ENCODE measurements at regions of chr11 and their contacts with region 1.

Region 1: GRCh38 chr11:126062679-126063506 is at the start of gene CDON:
- DNase-seq: peak; percentile 86
- ATAC-seq: peak; percentile 91
- H3K4me3 ChIP-seq: peak within 1 kb of the TSS; percentile 75 to 86 (median 80)
- H3K27ac ChIP-seq: peak within 1 kb of the TSS; percentile 100
- H3K4me1 ChIP-seq: peaks cover 53% of the 10 kb centered on the region
- H3K27me3 ChIP-seq: no peaks in the 10 kb centered on the region
- CTCF ChIP-seq: peak; percentile 60
- EP300 ChIP-seq: peak in 1 of 2 experiments; percentile 4; a peak in 1 of 4 replicates
- POLR2A ChIP-seq: peak in 1 of 2 experiments; percentile 71; a peak in 2 of 4 replicates
- RAD21 ChIP-seq: peak; percentile 74
- total RNA-seq, gene CDON: 8.4 and 12.8 TPM in 2 replicates

Region 2: DNA sequence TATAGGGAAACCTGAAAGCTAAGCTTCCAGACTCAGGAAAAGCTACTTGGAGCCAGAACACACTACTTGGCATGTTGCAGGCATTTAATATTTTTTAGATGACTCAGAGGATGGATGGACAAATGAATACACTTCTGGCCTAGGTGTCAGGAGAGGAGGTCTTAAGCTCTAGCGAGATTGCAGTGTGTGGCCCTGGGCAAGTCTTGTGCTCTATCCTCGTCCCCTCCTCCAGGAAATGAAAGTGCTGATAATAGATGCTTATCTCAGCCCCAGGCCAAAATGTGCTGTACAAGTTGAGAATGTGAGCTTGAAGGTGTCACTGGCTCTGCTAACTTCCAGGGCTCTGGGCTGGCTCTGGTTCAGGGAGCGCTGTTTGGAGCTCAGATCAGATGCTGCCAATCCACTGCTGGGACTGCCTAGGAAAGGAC is 762.1 kb before region 1 on chr11:
- CTCF ChIA-PET with region 1: no interaction called
- POLR2A ChIA-PET with region 1: no interaction called
- in situ Hi-C with region 1: no loop called
- intact Hi-C with region 1: no loop called
- DNase-seq: no peak
- ATAC-seq: no peak
- H3K4me3 ChIP-seq: no peak overlapping the region
- H3K27ac ChIP-seq: no peak overlapping the region
- H3K4me1 ChIP-seq: no peaks in the 10 kb centered on the region
- H3K27me3 ChIP-seq: peaks cover 2 to 33% of the 10 kb centered on the region in 2 experiments; a peak in 3 of 5 replicates
- CTCF ChIP-seq: no peak
- EP300 ChIP-seq: no peak
- POLR2A ChIP-seq: no peak
- RAD21 ChIP-seq: no peak

Region 3: DNA sequence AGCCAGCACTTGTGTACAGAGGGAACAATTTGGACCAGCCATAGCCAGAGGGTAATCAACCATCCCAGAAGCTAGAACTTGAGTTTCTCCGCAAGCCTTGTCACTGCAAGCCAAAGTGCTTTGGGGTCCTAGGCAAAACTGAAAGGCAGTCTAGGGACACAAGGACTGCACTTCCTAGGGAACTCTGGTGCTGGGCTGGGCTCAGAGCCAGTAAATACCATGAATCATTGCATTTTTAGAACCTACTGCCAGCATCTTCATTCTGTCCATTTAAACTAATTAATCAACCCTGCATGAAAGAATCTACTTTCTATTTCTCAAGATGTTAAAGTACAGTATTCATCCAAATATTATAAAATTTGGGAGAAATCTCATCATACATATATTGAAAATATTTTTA is 255.0 kb before region 1 on chr11:
- CTCF ChIA-PET with region 1: no interaction called
- POLR2A ChIA-PET with region 1: no interaction called
- in situ Hi-C with region 1: no loop called
- intact Hi-C with region 1: no loop called
- DNase-seq: no peak
- ATAC-seq: no peak
- H3K4me3 ChIP-seq: no peak overlapping the region
- H3K27ac ChIP-seq: no peak overlapping the region
- H3K4me1 ChIP-seq: no peaks in the 10 kb centered on the region
- H3K27me3 ChIP-seq: 0 out of 5 replicates have a peak, but pooled peaks cover 0 to 2% of the 10 kb centered on the region in 2 experiments
- CTCF ChIP-seq: no peak
- EP300 ChIP-seq: no peak
- POLR2A ChIP-seq: no peak
- RAD21 ChIP-seq: no peak

Region 4: DNA sequence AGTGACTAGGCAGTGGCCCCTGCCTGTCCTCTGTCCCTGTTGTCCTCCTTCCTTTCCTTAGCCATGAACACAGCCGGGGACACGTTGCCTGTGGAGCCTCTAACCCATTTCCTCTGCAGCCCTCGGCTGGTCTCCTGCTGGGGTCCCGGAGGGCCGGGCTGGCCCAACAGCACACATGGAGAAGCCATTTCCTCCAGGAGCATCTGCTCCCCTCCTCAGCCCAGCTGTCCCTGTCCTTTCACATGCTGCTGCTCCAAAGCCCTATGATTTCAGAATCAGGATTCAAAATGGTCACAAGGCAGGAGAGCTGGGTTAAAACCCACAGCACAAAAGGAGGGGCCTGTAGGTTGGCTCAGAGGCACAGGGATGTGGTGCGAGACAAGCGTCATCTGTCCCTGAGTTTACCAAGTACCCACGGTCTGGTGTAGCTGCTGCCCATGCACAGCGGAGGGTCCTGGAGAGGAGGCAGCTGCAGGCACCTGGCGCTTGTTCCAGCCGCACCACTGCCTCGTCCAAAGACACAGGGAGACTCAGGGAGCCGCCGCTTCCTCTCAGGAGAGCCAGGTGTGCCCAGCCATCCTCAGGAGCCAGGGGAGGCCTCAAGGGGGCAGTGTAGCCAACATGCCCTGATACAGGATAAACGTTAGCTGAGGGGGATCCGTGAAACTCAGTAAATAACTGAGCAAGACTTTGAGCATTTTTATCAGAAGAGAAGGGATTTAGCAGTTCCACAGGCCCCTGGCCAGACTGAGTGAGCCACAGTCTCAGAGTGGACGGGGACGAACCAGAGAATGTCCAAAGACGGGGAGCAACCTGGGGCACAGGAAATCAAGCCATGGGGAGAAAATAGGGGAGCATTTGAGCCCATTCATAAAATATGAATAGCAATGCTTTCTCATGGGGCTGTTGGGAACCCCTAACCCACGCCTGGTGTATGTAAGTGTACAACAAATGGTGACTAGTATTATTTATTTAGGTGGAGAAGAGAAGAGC is 121.0 kb before region 1 on chr11:
- CTCF ChIA-PET with region 1: interaction called, 3 read pairs
- POLR2A ChIA-PET with region 1: no interaction called
- in situ Hi-C with region 1: loop called (anchors 5 kb)
- intact Hi-C with region 1: loop called (anchors 1 kb)
- DNase-seq: peak; percentile 60
- ATAC-seq: peak; percentile 93
- H3K4me3 ChIP-seq: peak overlapping the region; percentile 36 to 64 (median 37)
- H3K27ac ChIP-seq: no peak overlapping the region
- H3K4me1 ChIP-seq: peaks cover 43% of the 10 kb centered on the region
- H3K27me3 ChIP-seq: peaks cover 0 to 3% of the 10 kb centered on the region in 2 experiments; a peak in 1 of 5 replicates
- CTCF ChIP-seq: peak; percentile 93
- EP300 ChIP-seq: no peak
- POLR2A ChIP-seq: no peak
- RAD21 ChIP-seq: peak; percentile 39; the same call in 1 of the 2 replicates

Region 5: GRCh38 chr11:126083829-126084607 is 21.1 kb after region 1 on chr11:
- CTCF ChIA-PET with region 1: no interaction called
- POLR2A ChIA-PET with region 1: interaction called, 4 read pairs
- in situ Hi-C with region 1: no loop called
- intact Hi-C with region 1: loop called (anchors 2 kb)
- DNase-seq: no peak
- ATAC-seq: peak; percentile 48
- H3K4me3 ChIP-seq: peak overlapping the region; percentile 11 to 57 (median 41); a peak in 4 of 6 replicates
- H3K27ac ChIP-seq: peak overlapping the region; percentile 29
- H3K4me1 ChIP-seq: peaks cover 87% of the 10 kb centered on the region
- H3K27me3 ChIP-seq: no peaks in the 10 kb centered on the region; a peak in 1 of 5 replicates
- CTCF ChIP-seq: no peak
- EP300 ChIP-seq: no peak
- POLR2A ChIP-seq: no peak
- RAD21 ChIP-seq: no peak

Region 6: DNA sequence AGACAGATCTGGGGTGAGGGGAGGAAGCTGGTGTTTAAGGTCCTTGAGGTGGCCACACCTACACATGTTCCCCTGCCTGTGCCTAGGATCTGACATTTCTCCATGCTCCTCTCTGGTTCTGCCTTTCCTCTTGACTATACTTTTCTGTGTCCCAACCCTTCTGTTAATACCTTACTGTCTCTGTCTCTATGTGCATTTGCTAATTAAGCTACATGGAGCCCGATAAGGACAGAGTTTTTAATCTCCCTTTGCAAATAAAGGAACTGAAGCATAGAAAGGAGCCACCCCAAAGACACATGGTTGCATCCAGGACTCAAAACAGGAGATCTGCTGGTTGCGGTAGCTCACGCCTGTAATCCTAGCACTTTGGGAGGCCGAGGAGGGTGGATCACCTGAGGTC is 32.9 kb after region 1 on chr11:
- CTCF ChIA-PET with region 1: no interaction called
- POLR2A ChIA-PET with region 1: no interaction called
- in situ Hi-C with region 1: no loop called
- intact Hi-C with region 1: no loop called
- DNase-seq: no peak
- ATAC-seq: no peak
- H3K4me3 ChIP-seq: no peak overlapping the region
- H3K27ac ChIP-seq: no peak overlapping the region
- H3K4me1 ChIP-seq: peaks cover 64% of the 10 kb centered on the region
- H3K27me3 ChIP-seq: no peaks in the 10 kb centered on the region
- CTCF ChIP-seq: no peak
- EP300 ChIP-seq: no peak
- POLR2A ChIP-seq: no peak
- RAD21 ChIP-seq: no peak

Region 7: GRCh38 chr11:126186708-126187529 is 124.0 kb after region 1 on chr11:
- CTCF ChIA-PET with region 1: no interaction called
- POLR2A ChIA-PET with region 1: interaction called, 5 read pairs
- in situ Hi-C with region 1: loop called (anchors 10 kb)
- intact Hi-C with region 1: loop called (anchors 2 kb)
- DNase-seq: peak; percentile 87
- ATAC-seq: peak; percentile 82
- H3K4me3 ChIP-seq: peak overlapping the region; percentile 25 to 60 (median 37); a peak in 4 of 6 replicates
- H3K27ac ChIP-seq: peak overlapping the region; percentile 94
- H3K4me1 ChIP-seq: peaks cover 96% of the 10 kb centered on the region
- H3K27me3 ChIP-seq: no peaks in the 10 kb centered on the region
- CTCF ChIP-seq: peak; percentile 52
- EP300 ChIP-seq: peak in 1 of 2 experiments; percentile 74; a peak in 2 of 4 replicates
- POLR2A ChIP-seq: peak in 1 of 2 experiments; percentile 59; a peak in 2 of 4 replicates
- RAD21 ChIP-seq: peak; percentile 63